ENCODE measurements at regions of chr2 and their contacts with region 1.

Region 1: GRCh38 chr2:202375609-202376408 is at the start of gene BMPR2:
- DNase-seq: peak; percentile 94
- H3K4me3 ChIP-seq: peak within 1 kb of the TSS; percentile 95 to 99 (median 97)
- H3K27ac ChIP-seq: peak within 1 kb of the TSS; percentile 99
- H3K4me1 ChIP-seq: peaks cover 18% of the 10 kb centered on the region
- H3K27me3 ChIP-seq: no peaks in the 10 kb centered on the region
- CTCF ChIP-seq: no peak
- POLR2A ChIP-seq: peak; percentile 97
- total RNA-seq, gene BMPR2: 113 and 115 TPM in 2 replicates

Region 2: DNA sequence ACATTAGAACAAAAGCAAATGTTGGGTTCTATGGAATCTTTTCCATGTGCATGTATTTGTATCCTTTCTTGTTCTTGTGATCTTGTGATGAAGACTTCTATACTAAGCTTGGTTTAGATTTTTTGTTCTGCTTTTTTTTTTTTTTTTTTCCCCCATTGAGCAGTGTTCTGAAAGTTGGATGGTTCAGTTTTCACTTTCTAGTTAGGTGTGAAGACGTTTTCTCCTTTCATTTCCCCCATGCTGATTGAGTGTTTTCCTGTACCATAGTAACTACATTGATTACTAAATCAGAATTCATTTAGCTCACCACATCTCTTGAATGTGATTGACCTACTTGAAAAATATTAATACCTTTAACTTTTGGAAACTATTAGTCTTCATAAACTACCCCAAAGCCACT is 76.1 kb before region 1 on chr2:
- CTCF ChIA-PET with region 1: interaction called, 6 read pairs
- POLR2A ChIA-PET with region 1: no interaction called
- dilution Hi-C with region 1: no loop called
- intact Hi-C with region 1: loop called (anchors 1 kb)
- DNase-seq: no peak
- H3K4me3 ChIP-seq: no peak overlapping the region
- H3K27ac ChIP-seq: no peak overlapping the region
- H3K4me1 ChIP-seq: peaks cover 7% of the 10 kb centered on the region
- H3K27me3 ChIP-seq: no peaks in the 10 kb centered on the region
- CTCF ChIP-seq: no peak
- POLR2A ChIP-seq: no peak

Region 3: GRCh38 chr2:202339071-202339870 is 36.5 kb before region 1 on chr2:
- CTCF ChIA-PET with region 1: interaction called, 7 read pairs
- POLR2A ChIA-PET with region 1: no interaction called
- dilution Hi-C with region 1: no loop called
- intact Hi-C with region 1: loop called (anchors 1 kb)
- DNase-seq: peak; percentile 80
- H3K4me3 ChIP-seq: no peak overlapping the region
- H3K27ac ChIP-seq: no peak overlapping the region
- H3K4me1 ChIP-seq: peaks cover 31% of the 10 kb centered on the region
- H3K27me3 ChIP-seq: no peaks in the 10 kb centered on the region
- CTCF ChIP-seq: no peak
- POLR2A ChIP-seq: no peak

Region 4: DNA sequence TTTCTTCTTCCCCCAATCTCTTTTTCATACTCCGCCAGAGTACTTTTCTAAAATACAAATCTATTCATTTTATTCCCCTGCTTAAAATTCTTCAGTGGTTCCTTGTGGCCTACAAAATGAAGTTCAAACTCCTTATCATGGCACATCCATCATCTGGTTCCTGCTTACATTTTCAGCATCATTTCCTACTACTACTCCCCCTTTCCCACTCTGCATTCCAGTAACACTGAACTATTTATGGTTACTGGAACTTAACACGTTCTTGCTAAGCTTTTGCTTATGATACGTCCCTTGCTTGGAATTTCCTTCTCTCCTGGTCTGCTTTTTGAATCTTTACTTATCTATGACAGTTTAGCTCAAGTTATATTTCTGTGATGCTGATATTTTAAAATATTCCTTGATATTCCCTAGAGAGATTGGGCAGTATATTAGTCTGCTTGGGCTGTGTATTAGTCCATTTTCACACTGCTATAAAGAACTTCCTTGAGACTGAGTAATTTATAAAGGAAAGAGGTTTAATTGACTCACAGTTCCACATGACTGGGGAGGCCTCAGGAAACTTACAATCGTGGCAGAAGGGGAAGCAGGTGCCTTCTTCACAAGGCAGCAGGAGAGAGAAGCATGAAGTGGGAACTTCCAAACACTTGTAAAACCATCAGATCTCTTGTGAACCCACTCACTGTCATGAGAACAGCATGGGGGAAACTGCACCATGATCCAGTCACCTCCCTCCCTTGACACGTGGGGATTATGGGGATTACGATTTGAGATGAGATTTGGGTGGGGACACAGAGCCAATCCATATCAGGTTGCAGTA is 53.6 kb after region 1 on chr2:
- CTCF ChIA-PET with region 1: no interaction called
- POLR2A ChIA-PET with region 1: no interaction called
- dilution Hi-C with region 1: no loop called
- intact Hi-C with region 1: loop called (anchors 1 kb)
- DNase-seq: peak; percentile 90
- H3K4me3 ChIP-seq: no peak overlapping the region
- H3K27ac ChIP-seq: peak overlapping the region; percentile 75
- H3K4me1 ChIP-seq: peaks cover 18% of the 10 kb centered on the region
- H3K27me3 ChIP-seq: no peaks in the 10 kb centered on the region
- CTCF ChIP-seq: no peak
- POLR2A ChIP-seq: no peak

Region 5: DNA sequence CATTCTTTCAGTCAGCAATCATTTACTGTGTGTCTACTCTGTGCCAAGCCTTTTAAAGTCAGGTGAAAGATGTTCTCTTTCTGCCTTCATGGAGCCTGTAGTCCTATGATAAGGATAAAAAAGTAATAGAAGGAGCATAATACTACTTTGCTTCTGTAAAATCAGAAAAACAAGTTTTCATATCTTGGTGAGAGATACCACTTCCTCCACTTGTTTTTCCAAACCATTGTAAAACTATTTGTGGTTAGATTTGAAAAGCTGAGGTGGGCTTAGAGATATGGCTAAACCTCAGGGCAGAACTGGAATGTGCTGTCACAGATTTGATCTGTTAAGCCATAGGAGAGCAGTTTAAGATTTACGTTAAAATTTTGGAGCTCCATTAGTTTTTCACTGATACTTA is 154.2 kb after region 1 on chr2:
- CTCF ChIA-PET with region 1: no interaction called
- POLR2A ChIA-PET with region 1: no interaction called
- dilution Hi-C with region 1: no loop called
- intact Hi-C with region 1: loop called (anchors 5 kb)
- DNase-seq: peak; percentile 43
- H3K4me3 ChIP-seq: no peak overlapping the region
- H3K27ac ChIP-seq: peak overlapping the region; percentile 3
- H3K4me1 ChIP-seq: peaks cover 24% of the 10 kb centered on the region
- H3K27me3 ChIP-seq: no peaks in the 10 kb centered on the region
- CTCF ChIP-seq: no peak
- POLR2A ChIP-seq: no peak